Calu3 (cell line): ENCODE measurements at regions of chr6 and their contacts with region 1.

Region 1: GRCh38 chr6:56637640-56638039 is 5.0 kb downstream of the DST start:
- DNase-seq: no peak
- H3K4me3 Mint-ChIP-seq: no peak overlapping the region
- H3K27ac Mint-ChIP-seq: peak overlapping the region; percentile 20
- H3K4me1 Mint-ChIP-seq: peaks cover 14% of the 10 kb centered on the region
- H3K27me3 Mint-ChIP-seq: no peaks in the 10 kb centered on the region
- CTCF ChIP-seq: peak; percentile 27

Region 2: DNA sequence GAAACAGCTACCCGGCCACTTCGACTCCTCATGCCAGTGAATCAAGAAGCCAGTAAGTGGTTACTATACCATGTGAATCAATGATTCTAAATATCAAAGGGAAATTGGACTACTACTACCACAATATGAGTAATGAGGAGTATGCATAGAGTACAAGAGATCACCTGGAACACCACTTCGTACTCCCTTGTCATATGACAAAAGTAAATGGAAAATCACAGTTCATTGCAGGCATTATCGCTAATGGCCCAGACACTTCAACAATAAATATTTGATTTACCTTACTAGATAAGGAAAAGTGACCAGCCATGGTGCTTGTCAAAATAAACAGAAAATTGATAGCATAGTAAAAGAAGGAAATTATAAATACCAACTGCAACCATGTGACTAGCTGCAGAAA is 835.4 kb before region 1 on chr6:
- CTCF ChIA-PET with region 1: no interaction called
- intact Hi-C with region 1: no loop called
- DNase-seq: no peak
- H3K4me3 Mint-ChIP-seq: no peak overlapping the region
- H3K27ac Mint-ChIP-seq: no peak overlapping the region
- H3K4me1 Mint-ChIP-seq: no peaks in the 10 kb centered on the region
- H3K27me3 Mint-ChIP-seq: no peaks in the 10 kb centered on the region
- CTCF ChIP-seq: no peak

Region 3: GRCh38 chr6:56570413-56571359 is 67.0 kb before region 1 on chr6:
- CTCF ChIA-PET with region 1: no interaction called
- intact Hi-C with region 1: no loop called
- DNase-seq: no peak
- H3K4me3 Mint-ChIP-seq: no peak overlapping the region
- H3K27ac Mint-ChIP-seq: no peak overlapping the region
- H3K4me1 Mint-ChIP-seq: no peaks in the 10 kb centered on the region
- H3K27me3 Mint-ChIP-seq: no peaks in the 10 kb centered on the region
- CTCF ChIP-seq: peak; percentile 50

Region 4: GRCh38 chr6:56671651-56672461 is 34.2 kb after region 1 on chr6:
- CTCF ChIA-PET with region 1: no interaction called
- intact Hi-C with region 1: loop called (anchors 1 kb)
- DNase-seq: no peak
- H3K4me3 Mint-ChIP-seq: peak overlapping the region; percentile 30
- H3K27ac Mint-ChIP-seq: peak overlapping the region; percentile 85
- H3K4me1 Mint-ChIP-seq: peaks cover 39% of the 10 kb centered on the region
- H3K27me3 Mint-ChIP-seq: no peaks in the 10 kb centered on the region
- CTCF ChIP-seq: no peak

Region 5: DNA sequence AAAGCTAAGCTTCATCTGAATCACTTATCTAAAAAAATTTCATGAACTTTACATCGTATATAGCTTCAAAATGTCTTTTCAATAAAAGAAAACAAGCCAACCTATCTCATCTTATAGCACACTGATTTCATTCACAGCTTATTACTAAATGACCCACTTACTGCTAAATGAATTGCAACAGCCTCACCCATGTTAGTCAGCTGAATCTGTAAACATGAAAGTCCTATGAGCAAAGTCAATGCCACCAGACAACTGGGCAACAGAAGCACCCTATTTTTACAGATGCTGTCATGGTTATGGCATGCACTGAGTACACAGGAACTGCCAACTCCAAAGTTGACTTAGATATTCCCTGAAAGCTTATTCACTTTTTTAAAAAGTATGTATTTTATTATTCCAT is 46.2 kb after region 1 on chr6:
- CTCF ChIA-PET with region 1: no interaction called
- intact Hi-C with region 1: no loop called
- DNase-seq: peak; percentile 58
- H3K4me3 Mint-ChIP-seq: peak overlapping the region; percentile 33
- H3K27ac Mint-ChIP-seq: peak overlapping the region; percentile 60
- H3K4me1 Mint-ChIP-seq: peaks cover 52% of the 10 kb centered on the region
- H3K27me3 Mint-ChIP-seq: no peaks in the 10 kb centered on the region
- CTCF ChIP-seq: no peak

Region 6: GRCh38 chr6:56699066-56699654 is 61.5 kb after region 1 on chr6:
- CTCF ChIA-PET with region 1: interaction called, 6 read pairs
- intact Hi-C with region 1: loop called (anchors 1 kb)
- DNase-seq: no peak
- H3K4me3 Mint-ChIP-seq: no peak overlapping the region
- H3K27ac Mint-ChIP-seq: no peak overlapping the region
- H3K4me1 Mint-ChIP-seq: peaks cover 34% of the 10 kb centered on the region
- H3K27me3 Mint-ChIP-seq: no peaks in the 10 kb centered on the region
- CTCF ChIP-seq: no peak